Activated T-helper 2 cell treated with anti-CD3 and anti-CD28 coated beads, Interferon-gamma antibody, Interleukin-2, Interleukin-4, amounts not matched to agents 10 μg/mL and 5 μg/mL and 100 μg/mL, durations not matched to agents 14 hours and 24 hours and 36 hours (primary cell): ENCODE measurements at regions of chr5 and their contacts with region 1.

Region 1: GRCh38 chr5:43105369-43106289 is 15.1 kb upstream of the ZNF131 start:
- DNase-seq: peak; percentile 85
- H3K4me3 Mint-ChIP-seq: peak overlapping the region; percentile 80
- H3K27ac Mint-ChIP-seq: peak overlapping the region; percentile 84
- H3K4me1 Mint-ChIP-seq: peaks cover 44% of the 10 kb centered on the region
- H3K27me3 Mint-ChIP-seq: no peaks in the 10 kb centered on the region

Region 2: GRCh38 chr5:42994246-42995151 is 111.1 kb before region 1 on chr5:
- intact Hi-C with region 1: loop called (anchors 5 kb)
- DNase-seq: peak; percentile 86
- H3K4me3 Mint-ChIP-seq: peak overlapping the region; percentile 100
- H3K27ac Mint-ChIP-seq: peak overlapping the region; percentile 100
- H3K4me1 Mint-ChIP-seq: peaks cover 32% of the 10 kb centered on the region
- H3K27me3 Mint-ChIP-seq: no peaks in the 10 kb centered on the region

Region 3: DNA sequence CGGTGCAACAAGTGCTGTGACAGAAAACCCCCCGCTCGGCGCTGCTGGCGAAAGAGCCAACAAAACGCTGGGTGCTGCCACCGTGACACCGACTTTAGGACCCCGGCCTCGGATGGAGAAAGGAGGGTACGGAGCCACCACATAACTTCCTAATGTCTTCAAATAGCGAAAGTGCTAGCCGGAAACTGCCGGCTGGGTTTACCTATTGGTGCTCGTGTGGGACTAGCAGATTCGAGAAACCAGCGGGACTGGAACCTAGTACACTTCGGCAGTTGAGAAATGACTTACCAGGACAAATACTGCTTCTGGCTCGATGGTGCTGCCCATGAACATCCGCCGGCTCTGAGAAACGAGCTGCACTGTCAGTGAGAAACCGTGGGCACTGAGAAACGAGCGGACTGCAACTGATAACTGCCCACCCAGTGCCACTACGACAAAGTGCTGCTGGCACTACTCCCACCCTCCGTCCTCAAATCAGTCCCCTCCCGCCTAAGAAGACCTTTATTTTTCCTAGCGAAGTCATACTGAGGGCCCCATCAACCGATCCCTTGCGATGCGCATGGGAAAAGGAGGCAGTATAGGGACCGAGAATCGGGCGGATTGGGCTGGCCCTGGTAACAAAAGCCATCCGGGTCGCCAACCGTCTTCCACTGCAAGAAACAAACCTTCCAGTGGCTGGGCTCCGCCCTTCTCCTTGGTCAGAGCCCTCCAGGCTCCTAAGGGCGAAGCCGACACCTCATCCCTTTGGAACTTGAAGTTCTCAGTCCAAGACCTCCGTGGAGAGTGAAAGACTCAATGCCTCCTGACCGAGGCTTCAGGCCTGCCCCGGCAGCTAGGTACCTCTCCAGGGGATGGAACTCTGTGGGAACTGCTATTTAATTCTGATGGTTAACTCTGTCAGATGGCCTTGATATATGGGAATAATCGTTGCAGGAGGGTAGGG is 38.6 kb before region 1 on chr5:
- intact Hi-C with region 1: loop called (anchors 1 kb)
- DNase-seq: peak; percentile 85
- H3K4me3 Mint-ChIP-seq: peak overlapping the region; percentile 91
- H3K27ac Mint-ChIP-seq: peak overlapping the region; percentile 97
- H3K4me1 Mint-ChIP-seq: peaks cover 32% of the 10 kb centered on the region
- H3K27me3 Mint-ChIP-seq: no peaks in the 10 kb centered on the region

Region 4: DNA sequence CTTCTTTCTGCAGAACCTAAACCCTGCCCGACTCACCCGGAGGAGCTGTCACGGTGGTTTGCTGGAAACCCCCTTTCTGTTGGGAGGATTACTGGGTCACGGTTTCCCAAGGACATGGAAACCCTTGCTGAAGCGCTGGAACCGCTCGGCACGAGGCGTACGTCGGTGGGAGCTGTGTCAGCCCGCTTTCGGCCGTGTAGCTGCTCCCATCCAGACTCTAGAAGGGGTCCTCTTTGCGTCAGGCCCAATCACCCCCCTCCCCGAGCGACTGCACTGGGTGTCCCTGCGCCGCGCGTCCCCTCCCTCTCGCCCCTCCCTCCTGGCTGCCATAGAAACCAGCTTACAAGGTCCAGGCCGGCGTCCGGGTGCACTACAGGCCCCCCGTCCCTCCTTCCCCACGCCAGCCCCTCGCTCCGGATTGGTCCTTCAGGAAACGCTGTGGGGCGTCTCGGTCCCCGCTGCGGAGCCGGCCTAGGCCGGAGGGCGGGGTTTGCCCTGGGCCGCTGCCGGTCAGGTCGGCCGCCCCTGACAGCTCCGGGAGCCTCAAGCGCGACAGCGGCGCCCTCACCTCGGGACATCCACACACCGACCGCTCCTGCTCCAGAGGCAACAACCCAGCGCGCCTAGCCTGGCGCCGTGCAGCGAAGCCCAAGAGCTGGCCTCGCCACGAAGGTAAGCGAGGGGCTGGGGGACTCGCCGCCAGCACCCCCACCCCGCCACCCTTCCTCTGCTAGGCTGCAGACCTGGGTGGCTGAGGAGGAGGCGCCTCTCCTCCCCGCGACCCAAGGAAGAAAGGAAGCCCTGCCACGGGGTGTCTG is 86.3 kb after region 1 on chr5 and contains the start of gene NIM1K:
- intact Hi-C with region 1: loop called (anchors 2 kb)
- DNase-seq: peak; percentile 35
- H3K4me3 Mint-ChIP-seq: peak within 1 kb of the TSS; percentile 82
- H3K27ac Mint-ChIP-seq: peak within 1 kb of the TSS; percentile 59
- H3K4me1 Mint-ChIP-seq: peaks cover 24% of the 10 kb centered on the region
- H3K27me3 Mint-ChIP-seq: peaks cover 10% of the 10 kb centered on the region
- total RNA-seq, gene NIM1K: 0.76 and 1.1 TPM in 2 replicates

Region 5: DNA sequence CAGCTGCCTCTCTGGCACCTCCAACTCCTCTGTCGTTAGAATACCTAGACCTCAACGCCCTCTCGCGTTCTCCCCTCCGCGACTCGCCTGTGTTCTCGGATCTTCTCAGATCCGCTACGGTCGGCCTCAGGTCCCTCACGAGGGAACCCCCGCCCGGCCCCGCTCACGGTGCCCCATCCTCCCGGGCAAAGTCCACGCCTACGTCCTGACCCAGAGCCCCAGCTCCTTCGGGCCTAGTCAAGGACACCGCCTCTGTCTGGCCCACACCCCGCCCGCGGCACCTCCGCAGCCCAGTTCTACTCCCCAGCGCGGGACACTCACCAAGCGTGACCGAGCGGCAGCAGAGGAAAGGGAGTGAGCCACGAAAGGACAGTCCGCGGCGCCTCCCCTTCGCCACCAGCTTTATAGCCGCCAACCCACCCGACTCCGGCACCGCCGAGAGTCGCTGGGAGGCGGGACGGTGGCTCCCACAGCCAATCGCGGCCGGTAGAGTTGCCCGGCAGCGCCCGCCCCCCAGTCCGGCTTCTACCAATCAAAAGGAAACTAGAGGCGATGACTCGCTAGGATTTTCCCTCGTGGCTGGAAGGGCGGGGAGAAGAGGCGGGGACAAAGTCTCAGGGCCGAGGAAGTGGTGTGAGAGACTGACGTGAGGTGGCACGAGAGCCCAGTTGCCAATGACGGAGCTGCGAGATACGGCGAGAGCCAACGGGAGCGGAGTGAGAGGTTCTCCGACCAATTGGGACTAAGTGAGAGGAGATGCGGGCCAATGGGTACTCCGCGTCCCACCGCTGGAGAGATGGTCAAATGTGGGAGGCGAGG is 207.6 kb after region 1 on chr5 and contains the start of gene HMGCS1:
- intact Hi-C with region 1: loop called (anchors 2 kb)
- DNase-seq: peak; percentile 99
- H3K4me3 Mint-ChIP-seq: peak within 1 kb of the TSS; percentile 98
- H3K27ac Mint-ChIP-seq: peak within 1 kb of the TSS; percentile 95
- H3K4me1 Mint-ChIP-seq: peaks cover 67% of the 10 kb centered on the region
- H3K27me3 Mint-ChIP-seq: no peaks in the 10 kb centered on the region
- total RNA-seq, gene HMGCS1: 232 and 233 TPM in 2 replicates

Region 6: GRCh38 chr5:43556857-43557542 is 451.4 kb after region 1 on chr5 and contains the start of gene PAIP1:
- intact Hi-C with region 1: loop called (anchors 2 kb)
- DNase-seq: peak; percentile 84
- H3K4me3 Mint-ChIP-seq: peak within 1 kb of the TSS; percentile 86
- H3K27ac Mint-ChIP-seq: peak within 1 kb of the TSS; percentile 90
- H3K4me1 Mint-ChIP-seq: peaks cover 8% of the 10 kb centered on the region
- H3K27me3 Mint-ChIP-seq: peaks cover 9% of the 10 kb centered on the region
- total RNA-seq, gene PAIP1: 56.8 and 58.0 TPM in 2 replicates